ENCODE measurements at regions of chrX and their contacts with region 1.

Region 1: GRCh38 chrX:43882299-43882694 is at the start of gene MAOB:
- DNase-seq: no peak
- H3K4me3 ChIP-seq: peak within 1 kb of the TSS; percentile 21 to 29
- H3K27ac ChIP-seq: peak within 1 kb of the TSS in 1 of 2 donors; percentile 26
- H3K4me1 ChIP-seq: no peaks in the 10 kb centered on the region
- H3K27me3 ChIP-seq: no peaks in the 10 kb centered on the region
- CTCF ChIP-seq: no peak
- POLR2A ChIP-seq: no peak
- total RNA-seq, gene MAOB: 15.6 to 33.5 TPM

Region 2: GRCh38 chrX:43836435-43837184 is 45.7 kb before region 1 on chrX:
- intact Hi-C with region 1: loop called (anchors 5 kb)
- DNase-seq: no peak
- H3K4me3 ChIP-seq: no peak overlapping the region
- H3K27ac ChIP-seq: no peak overlapping the region
- H3K4me1 ChIP-seq: no peaks in the 10 kb centered on the region
- H3K27me3 ChIP-seq: no peaks in the 10 kb centered on the region
- CTCF ChIP-seq: peak in 2 of 4 experiments; percentile 59 to 62
- POLR2A ChIP-seq: no peak